Left cardiac atrium (tissue), 4 donors: ENCODE measurements at regions of chr17 and their contacts with region 1.

Region 1: DNA sequence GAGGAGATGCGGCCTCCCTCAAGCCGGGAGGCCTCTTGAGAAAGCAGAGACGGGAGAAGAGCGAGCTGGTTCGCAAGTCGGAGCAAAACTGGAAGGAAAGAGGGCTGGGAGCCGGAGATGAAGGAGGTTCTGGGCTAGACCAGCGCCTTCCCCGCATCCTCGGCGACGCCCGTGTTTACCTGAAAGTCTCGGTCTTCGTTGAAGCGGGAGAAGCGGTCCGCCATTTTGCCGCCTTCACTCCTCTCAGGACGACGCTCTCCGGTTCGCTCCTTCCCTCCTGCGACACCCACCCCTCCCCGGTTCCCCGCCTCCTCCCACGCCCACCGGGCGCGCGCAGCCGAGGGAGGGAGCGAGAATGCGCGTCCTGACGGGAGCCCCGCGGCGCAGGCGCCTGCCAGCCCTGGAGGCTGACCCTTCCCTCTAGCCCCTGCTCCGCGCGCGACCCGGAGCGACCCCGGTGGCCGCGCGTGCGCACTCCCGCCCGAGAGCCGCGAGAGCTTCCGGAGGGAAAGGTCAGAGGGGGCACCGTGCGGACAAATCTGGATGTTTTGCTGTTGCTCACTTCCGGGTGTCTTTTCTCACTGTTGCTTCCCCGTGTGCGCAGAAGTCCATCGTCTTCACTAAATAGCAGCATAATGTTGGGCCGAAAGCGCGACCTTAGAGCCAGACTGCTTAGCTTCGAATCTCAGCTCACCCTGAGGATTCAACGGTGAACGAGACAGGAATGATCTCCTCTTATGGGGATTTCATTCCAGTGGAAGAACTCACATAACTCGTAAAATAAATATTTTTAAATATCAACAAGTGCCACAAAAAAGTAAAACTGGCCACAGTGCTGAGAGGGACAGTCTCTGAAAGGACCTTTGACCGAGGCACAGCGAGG is at the start of gene GPATCH8:
- DNase-seq: peak; percentile 95
- ATAC-seq: peak; percentile 98 to 99
- total RNA-seq, gene GPATCH8: 20.8 to 28.9 TPM

Region 2: DNA sequence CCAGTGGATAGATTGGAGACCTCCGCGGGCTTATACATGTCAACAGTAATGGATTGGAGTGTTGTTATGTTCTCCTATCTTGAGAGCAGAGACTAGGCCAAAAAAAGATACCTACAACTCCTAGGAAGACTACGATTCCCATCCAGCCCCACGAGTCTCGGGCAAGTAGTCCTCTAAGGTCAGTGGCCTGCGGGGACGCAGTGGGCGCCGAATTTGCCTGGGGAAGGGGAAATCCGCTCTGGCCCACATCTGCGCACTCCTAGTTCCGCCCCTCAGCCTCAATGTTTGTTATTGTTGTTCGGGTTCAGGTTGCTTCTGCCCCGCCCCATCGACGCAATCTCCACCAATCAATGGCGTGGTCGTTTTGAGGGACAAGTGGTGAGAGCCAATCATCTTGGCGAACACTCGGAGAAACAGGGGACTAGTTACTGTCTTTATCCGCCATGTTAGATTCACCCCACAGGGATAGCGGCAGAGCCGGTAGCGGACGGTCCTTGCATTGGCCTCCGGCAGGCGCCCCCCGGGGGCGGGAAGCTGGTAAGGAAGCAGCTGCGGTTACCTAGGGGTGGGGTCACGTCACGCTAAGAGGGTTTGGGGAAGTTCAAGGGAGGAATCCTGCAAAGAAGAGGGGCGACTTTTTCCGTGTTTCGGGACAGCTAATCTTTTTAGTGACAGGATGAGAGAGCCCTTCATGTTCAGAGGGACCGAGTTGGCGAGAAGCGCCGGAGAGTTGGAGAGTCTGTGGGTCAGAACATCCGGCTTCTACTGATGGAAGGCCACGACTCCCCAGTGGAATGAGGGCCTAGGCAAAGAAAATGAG is 1332.4 kb before region 1 on chr17 and contains the start of gene NBR1:
- intact Hi-C with region 1: no loop called
- DNase-seq: peak; percentile 94
- ATAC-seq: peak; percentile 91 to 93
- total RNA-seq, gene NBR1: 71.9 to 87.2 TPM

Region 3: GRCh38 chr17:44385287-44386181 is 117.9 kb before region 1 on chr17:
- intact Hi-C with region 1: loop called in 1 of 2 experiments (anchors 5 kb)
- DNase-seq: peak; percentile 89
- ATAC-seq: peak; percentile 92 to 94

Region 4: GRCh38 chr17:44444735-44445105 is 58.7 kb before region 1 on chr17:
- intact Hi-C with region 1: no loop called
- DNase-seq: no peak
- ATAC-seq: no peak